ENCODE measurements at regions of chr17 and their contacts with region 1.

Region 1: GRCh38 chr17:5706577-5707216 is 122.4 kb upstream of the NLRP1 start:
- DNase-seq: peak; percentile 26 to 70
- H3K4me3 ChIP-seq: no peak overlapping the region
- H3K4me1 ChIP-seq: no peaks in the 10 kb centered on the region
- H3K27me3 ChIP-seq: no peaks in the 10 kb centered on the region; the same call in 1 of the 2 replicates

Region 2: DNA sequence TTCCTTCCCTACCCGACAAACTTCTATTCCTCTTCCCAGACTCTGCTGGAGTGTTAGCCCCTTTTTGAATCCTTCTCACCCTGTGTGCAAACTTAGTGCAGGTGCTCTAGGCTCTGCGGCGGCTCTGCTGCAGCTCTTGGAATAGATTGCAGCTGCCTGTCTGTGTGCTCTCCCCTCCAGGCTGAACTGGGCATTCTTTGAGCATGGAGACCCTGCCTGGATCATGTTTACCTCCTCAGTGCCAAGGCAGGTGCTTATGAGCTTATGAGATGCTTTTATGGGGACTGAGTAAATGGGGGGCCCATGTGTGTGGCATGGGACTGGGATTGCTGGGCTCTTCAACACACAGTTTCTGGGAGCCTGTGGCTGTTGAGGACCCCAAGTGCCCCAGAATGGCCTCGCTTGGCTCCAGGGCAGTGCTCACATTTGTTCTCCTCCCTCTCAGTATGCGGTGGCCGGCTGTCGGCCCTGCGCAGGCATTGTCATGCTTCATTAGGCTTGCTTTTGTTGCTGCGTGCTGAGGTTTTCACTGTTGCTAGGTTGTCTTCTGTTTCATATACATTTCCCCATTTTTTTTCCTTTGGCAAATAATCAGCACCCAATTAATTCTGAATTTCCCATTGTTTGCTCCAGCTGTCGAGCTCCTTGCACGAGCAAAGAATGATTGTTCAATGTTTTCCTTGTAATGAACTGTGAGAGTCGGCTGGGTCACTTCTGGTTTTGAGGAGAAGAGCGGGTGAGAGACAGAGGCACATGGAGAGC is 63.1 kb after region 1 on chr17:
- in situ Hi-C with region 1: loop called (anchors 10 kb)
- DNase-seq: no peak
- H3K4me3 ChIP-seq: no peak overlapping the region
- H3K4me1 ChIP-seq: no peaks in the 10 kb centered on the region
- H3K27me3 ChIP-seq: no peaks in the 10 kb centered on the region

Region 3: GRCh38 chr17:5841862-5842261 is 135.2 kb after region 1 on chr17:
- in situ Hi-C with region 1: no loop called
- DNase-seq: no peak
- H3K4me3 ChIP-seq: no peak overlapping the region
- H3K4me1 ChIP-seq: no peaks in the 10 kb centered on the region
- H3K27me3 ChIP-seq: no peaks in the 10 kb centered on the region